ENCODE measurements at regions of chr7 and their contacts with region 1.

Region 1: DNA sequence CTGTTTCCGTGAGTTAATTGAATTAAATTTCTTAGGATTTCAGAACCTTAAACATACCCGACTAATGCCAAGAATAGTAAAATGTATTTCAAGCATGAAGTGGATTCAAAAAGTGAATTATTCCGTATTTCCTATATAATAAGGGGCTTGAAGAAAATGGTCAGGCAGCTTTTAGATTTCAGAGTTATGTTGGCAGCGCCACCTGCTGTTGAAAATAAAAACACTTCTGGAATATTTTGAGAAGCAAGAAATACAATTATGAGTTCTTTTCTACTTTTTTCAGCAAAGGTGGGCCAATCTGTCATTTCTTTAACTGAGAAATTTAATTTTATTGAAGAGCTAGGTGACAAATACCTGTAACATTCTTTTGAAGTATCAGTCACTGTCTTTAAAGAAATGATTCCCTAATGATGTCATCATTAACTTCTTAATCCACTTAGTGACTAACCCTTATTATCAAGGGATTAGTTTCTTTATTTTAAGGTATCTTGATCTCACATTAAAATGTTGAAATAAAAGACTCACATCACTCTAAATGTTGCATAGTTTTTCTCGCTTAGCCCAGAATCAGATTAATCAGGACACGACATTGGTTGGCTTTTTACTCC is 36.6 kb upstream of the AGR3 start:
- DNase-seq: peak; percentile 54
- ATAC-seq: no peak
- H3K4me3 Mint-ChIP-seq: no peak overlapping the region
- H3K27ac Mint-ChIP-seq: no peak overlapping the region
- H3K4me1 Mint-ChIP-seq: peaks cover 16% of the 10 kb centered on the region
- H3K27me3 Mint-ChIP-seq: no peaks in the 10 kb centered on the region

Region 2: DNA sequence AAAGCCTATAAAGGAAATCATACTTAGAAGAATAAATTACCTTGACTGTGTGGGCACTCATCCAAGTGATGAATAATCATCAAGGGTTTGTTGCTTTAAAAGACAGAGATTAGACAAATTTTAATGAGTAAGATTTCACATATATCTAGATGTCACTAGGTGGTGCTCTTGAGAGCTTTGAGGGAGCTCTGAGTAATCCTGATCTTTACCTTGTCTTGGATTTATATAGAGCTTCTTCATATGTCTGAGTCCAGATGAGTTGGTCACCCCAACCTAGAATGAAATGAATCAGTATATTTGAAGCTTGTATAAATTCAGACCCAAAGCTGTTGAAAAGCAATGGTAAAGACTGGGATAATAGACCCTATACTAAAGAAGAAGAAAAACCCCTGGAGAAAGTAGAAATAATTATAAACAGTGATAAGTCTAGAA is 117.3 kb before region 1 on chr7:
- CTCF ChIA-PET with region 1: interaction called, 13 read pairs
- POLR2A ChIA-PET with region 1: no interaction called
- DNase-seq: no peak
- ATAC-seq: peak; percentile 55
- H3K4me3 Mint-ChIP-seq: no peak overlapping the region
- H3K27ac Mint-ChIP-seq: no peak overlapping the region
- H3K4me1 Mint-ChIP-seq: no peaks in the 10 kb centered on the region
- H3K27me3 Mint-ChIP-seq: peaks cover 8% of the 10 kb centered on the region

Region 3: GRCh38 chr7:16891338-16891737 is 27.1 kb before region 1 on chr7:
- CTCF ChIA-PET with region 1: interaction called, 51 read pairs
- POLR2A ChIA-PET with region 1: no interaction called
- DNase-seq: peak; percentile 46
- ATAC-seq: peak; percentile 76
- H3K4me3 Mint-ChIP-seq: no peak overlapping the region
- H3K27ac Mint-ChIP-seq: no peak overlapping the region
- H3K4me1 Mint-ChIP-seq: peaks cover 10% of the 10 kb centered on the region
- H3K27me3 Mint-ChIP-seq: peaks cover 2% of the 10 kb centered on the region

Measured in activated CD8-positive, alpha-beta T cell treated with anti-CD3 and anti-CD28 coated beads, Interleukin-2, amount 10 ng/mL, durations not matched to agents 7 days and 5 days (primary cell).